IMR-90 (cell line): ENCODE measurements at regions of chr16 and their contacts with region 1.

Region 1: DNA sequence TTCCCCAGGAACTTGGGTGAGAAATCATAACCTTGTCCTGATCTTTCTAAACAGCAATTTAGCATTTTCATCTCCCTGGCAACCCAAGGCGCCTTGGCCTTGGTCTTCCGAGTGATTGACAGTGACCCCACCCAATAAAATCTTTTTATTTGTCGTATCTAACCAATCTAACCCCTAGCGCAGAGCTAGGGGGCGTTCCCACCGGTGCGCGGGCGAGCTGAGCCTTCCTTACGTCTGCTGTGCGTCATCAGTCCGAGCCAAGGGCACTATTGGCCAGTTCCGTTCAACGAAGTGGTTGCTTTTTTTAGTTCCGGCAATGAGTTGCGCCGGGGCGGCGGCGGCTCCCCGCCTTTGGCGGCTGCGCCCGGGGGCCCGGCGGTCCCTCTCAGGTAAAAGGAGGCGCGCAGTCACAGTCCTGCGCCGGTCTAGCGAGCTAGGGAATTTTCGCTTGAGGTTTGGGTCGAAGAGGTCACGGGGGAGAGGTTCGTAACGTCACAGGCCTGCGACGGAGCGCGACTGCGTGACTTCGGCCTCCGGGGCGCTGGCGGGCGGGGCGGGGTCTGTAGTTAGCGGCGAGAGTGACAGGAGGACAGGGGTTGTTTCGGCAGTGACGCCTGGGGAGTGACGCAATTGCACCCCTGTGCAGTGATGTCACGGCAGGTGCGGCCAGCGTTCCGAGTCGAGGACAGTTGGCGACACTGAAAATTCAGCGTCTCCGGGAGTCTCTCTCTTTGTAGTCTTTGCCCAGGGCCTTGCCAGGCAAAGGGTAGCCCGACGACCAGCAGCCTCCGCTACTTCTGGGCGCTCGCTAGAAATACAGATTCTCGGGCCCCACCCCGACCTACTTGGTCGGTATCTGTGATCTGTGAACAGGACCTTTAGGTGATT is at the start of gene COQ7:
- DNase-seq: peak; percentile 100
- ATAC-seq: peak; percentile 98
- H3K4me3 ChIP-seq: peak within 1 kb of the TSS; percentile 64
- H3K27ac ChIP-seq: peak within 1 kb of the TSS; percentile 87
- H3K4me1 ChIP-seq: no peaks in the 10 kb centered on the region
- H3K27me3 ChIP-seq: no peaks in the 10 kb centered on the region
- CTCF ChIP-seq: no peak
- POLR2A ChIP-seq: peak; percentile 73; the same call in 1 of the 2 replicates
- RAD21 ChIP-seq: no peak
- total RNA-seq, gene COQ7: 10.9 and 15.0 TPM in 2 replicates

Region 2: GRCh38 chr16:18999045-18999393 is 68.6 kb before region 1 on chr16:
- CTCF ChIA-PET with region 1: no interaction called
- POLR2A ChIA-PET with region 1: no interaction called
- dilution Hi-C with region 1: no loop called
- in situ Hi-C with region 1: no loop called
- intact Hi-C with region 1: loop called (anchors 5 kb)
- DNase-seq: no peak
- ATAC-seq: peak; percentile 6; the same call in 1 of the 2 replicates
- H3K4me3 ChIP-seq: no peak overlapping the region
- H3K27ac ChIP-seq: no peak overlapping the region
- H3K4me1 ChIP-seq: peaks cover 4% of the 10 kb centered on the region
- H3K27me3 ChIP-seq: no peaks in the 10 kb centered on the region
- CTCF ChIP-seq: no peak
- POLR2A ChIP-seq: no peak
- RAD21 ChIP-seq: no peak

Region 3: DNA sequence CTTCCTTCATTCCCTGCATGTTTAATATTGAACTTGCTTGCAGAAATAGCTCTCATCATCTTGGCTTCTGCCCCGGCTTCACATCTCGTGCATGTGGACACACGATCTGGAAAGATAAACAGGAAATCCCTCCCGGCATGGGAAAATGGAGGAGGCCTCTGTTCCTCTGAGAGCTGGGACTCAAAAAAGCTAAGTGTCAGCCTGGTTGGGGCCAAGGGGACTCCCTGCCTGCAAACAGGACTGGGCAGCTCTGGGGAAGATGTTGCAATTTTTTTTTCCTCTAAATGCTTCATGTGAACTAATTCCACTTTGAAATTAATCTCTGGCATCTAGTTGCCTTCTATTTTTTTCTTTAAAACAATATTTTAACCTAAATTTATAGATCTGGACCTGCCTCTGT is 71.0 kb after region 1 on chr16:
- CTCF ChIA-PET with region 1: no interaction called
- POLR2A ChIA-PET with region 1: no interaction called
- dilution Hi-C with region 1: no loop called
- in situ Hi-C with region 1: no loop called
- intact Hi-C with region 1: no loop called
- DNase-seq: peak; percentile 89
- ATAC-seq: peak; percentile 76
- H3K4me3 ChIP-seq: no peak overlapping the region
- H3K27ac ChIP-seq: peak overlapping the region; percentile 55; the same call in 1 of the 2 replicates
- H3K4me1 ChIP-seq: peaks cover 29% of the 10 kb centered on the region
- H3K27me3 ChIP-seq: no peaks in the 10 kb centered on the region
- CTCF ChIP-seq: no peak
- POLR2A ChIP-seq: no peak
- RAD21 ChIP-seq: no peak

Region 4: GRCh38 chr16:19254611-19255010 is 187.0 kb after region 1 on chr16:
- CTCF ChIA-PET with region 1: no interaction called
- POLR2A ChIA-PET with region 1: no interaction called
- dilution Hi-C with region 1: no loop called
- in situ Hi-C with region 1: no loop called
- intact Hi-C with region 1: no loop called
- DNase-seq: no peak
- ATAC-seq: no peak
- H3K4me3 ChIP-seq: no peak overlapping the region
- H3K27ac ChIP-seq: no peak overlapping the region
- H3K4me1 ChIP-seq: no peaks in the 10 kb centered on the region
- H3K27me3 ChIP-seq: no peaks in the 10 kb centered on the region
- CTCF ChIP-seq: no peak
- POLR2A ChIP-seq: no peak
- RAD21 ChIP-seq: no peak

Region 5: GRCh38 chr16:19419691-19420060 is 352.1 kb after region 1 on chr16:
- CTCF ChIA-PET with region 1: no interaction called
- POLR2A ChIA-PET with region 1: no interaction called
- dilution Hi-C with region 1: no loop called
- in situ Hi-C with region 1: no loop called
- intact Hi-C with region 1: no loop called
- DNase-seq: peak; percentile 4
- ATAC-seq: no peak
- H3K4me3 ChIP-seq: no peak overlapping the region
- H3K27ac ChIP-seq: no peak overlapping the region
- H3K4me1 ChIP-seq: no peaks in the 10 kb centered on the region
- H3K27me3 ChIP-seq: no peaks in the 10 kb centered on the region
- CTCF ChIP-seq: no peak
- POLR2A ChIP-seq: no peak
- RAD21 ChIP-seq: no peak

Region 6: DNA sequence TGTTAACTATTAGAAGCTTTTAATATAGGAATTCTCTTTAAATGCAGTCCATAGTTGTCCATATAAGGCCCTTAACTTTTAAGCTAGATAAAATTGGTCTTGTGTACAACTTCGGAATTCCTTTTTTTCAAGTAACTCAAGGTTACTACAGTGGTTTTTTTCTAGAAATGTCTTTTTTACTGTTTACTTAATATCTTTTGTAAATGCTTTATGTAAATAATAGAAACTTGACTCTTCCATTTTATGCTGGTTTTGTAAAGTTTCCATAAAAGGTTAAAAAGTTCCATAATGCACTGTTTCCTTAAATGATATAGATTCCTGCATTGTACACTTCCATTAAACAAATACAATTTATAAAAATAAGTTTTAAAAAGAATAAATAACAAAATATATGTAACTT is 442.8 kb after region 1 on chr16:
- CTCF ChIA-PET with region 1: no interaction called
- POLR2A ChIA-PET with region 1: interaction called, 10 read pairs
- dilution Hi-C with region 1: no loop called
- in situ Hi-C with region 1: no loop called
- intact Hi-C with region 1: no loop called
- DNase-seq: no peak
- ATAC-seq: no peak
- H3K4me3 ChIP-seq: no peak overlapping the region
- H3K27ac ChIP-seq: no peak overlapping the region
- H3K4me1 ChIP-seq: 0 out of 2 replicates have a peak, but pooled peaks cover 2% of the 10 kb centered on the region
- H3K27me3 ChIP-seq: no peaks in the 10 kb centered on the region
- CTCF ChIP-seq: no peak
- POLR2A ChIP-seq: no peak
- RAD21 ChIP-seq: no peak

Region 7: GRCh38 chr16:20175358-20175757 is 1107.8 kb after region 1 on chr16:
- CTCF ChIA-PET with region 1: no interaction called
- POLR2A ChIA-PET with region 1: no interaction called
- dilution Hi-C with region 1: no loop called
- in situ Hi-C with region 1: no loop called
- intact Hi-C with region 1: no loop called
- DNase-seq: no peak
- ATAC-seq: no peak
- H3K4me3 ChIP-seq: no peak overlapping the region
- H3K27ac ChIP-seq: no peak overlapping the region
- H3K4me1 ChIP-seq: no peaks in the 10 kb centered on the region
- H3K27me3 ChIP-seq: no peaks in the 10 kb centered on the region
- CTCF ChIP-seq: no peak
- POLR2A ChIP-seq: no peak
- RAD21 ChIP-seq: no peak